ENCODE measurements at regions of chr3 and their contacts with region 1.

Region 1: GRCh38 chr3:71226565-71227269 is 356.8 kb downstream of the FOXP1 start:
- DNase-seq: peak; percentile 95
- ATAC-seq: peak; percentile 89
- H3K4me3 Mint-ChIP-seq: peak overlapping the region; percentile 78
- H3K27ac Mint-ChIP-seq: peak overlapping the region; percentile 97
- H3K4me1 Mint-ChIP-seq: peaks cover 88% of the 10 kb centered on the region
- H3K27me3 Mint-ChIP-seq: no peaks in the 10 kb centered on the region

Region 2: GRCh38 chr3:71006810-71007785 is 219.6 kb before region 1 on chr3:
- CTCF ChIA-PET with region 1: no interaction called
- POLR2A ChIA-PET with region 1: no interaction called
- intact Hi-C with region 1: loop called (anchors 1 kb)
- DNase-seq: no peak
- ATAC-seq: no peak
- H3K4me3 Mint-ChIP-seq: no peak overlapping the region
- H3K27ac Mint-ChIP-seq: peak overlapping the region; percentile 79
- H3K4me1 Mint-ChIP-seq: peaks cover 79% of the 10 kb centered on the region
- H3K27me3 Mint-ChIP-seq: no peaks in the 10 kb centered on the region

Region 3: DNA sequence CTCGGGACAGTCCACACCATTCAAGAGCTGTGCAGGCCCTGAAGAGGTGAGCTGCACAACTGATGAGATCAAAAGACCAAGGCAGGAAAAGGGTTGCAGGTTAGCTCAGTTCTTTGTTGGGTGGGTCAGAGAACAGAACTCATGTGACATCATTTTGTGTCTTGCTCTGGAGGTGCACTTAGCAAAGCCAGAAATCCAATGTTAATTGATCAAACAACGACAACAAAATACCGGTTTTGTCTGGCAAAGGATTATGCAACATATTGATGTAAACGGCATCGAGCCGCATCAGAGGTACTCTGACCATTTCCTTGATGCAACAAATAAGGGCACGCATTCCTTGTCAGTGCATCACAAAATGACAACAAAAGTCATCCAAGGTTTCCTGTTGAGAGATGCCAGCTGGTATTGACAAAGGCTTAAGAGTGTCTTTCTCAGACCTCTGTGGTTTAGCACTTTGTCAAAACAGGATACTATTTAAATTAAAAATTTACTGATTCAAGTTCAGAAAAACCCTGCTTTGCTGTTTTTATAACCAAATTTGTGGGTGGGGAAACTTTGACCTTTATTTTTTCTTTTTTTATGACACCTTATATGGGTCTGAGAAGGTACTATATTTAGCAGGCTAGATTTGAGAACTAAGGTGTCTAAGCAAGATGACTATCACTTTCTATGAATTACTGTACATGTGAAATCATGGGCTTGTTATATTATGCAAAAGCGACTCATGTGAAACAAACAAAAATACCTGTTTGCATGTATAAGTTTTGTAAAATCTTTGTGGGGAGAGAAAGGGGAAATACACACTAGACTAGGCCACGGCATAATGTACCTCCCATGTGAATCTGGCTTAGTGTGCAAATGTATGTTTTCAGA is 139.3 kb before region 1 on chr3:
- CTCF ChIA-PET with region 1: interaction called, 6 read pairs
- POLR2A ChIA-PET with region 1: interaction called, 4 read pairs
- intact Hi-C with region 1: loop called (anchors 1 kb)
- DNase-seq: peak; percentile 61
- ATAC-seq: peak; percentile 74
- H3K4me3 Mint-ChIP-seq: peak overlapping the region; percentile 52
- H3K27ac Mint-ChIP-seq: peak overlapping the region; percentile 93
- H3K4me1 Mint-ChIP-seq: peaks cover 94% of the 10 kb centered on the region
- H3K27me3 Mint-ChIP-seq: no peaks in the 10 kb centered on the region

Region 4: GRCh38 chr3:71195492-71195891 is 31.2 kb before region 1 on chr3:
- CTCF ChIA-PET with region 1: no interaction called
- POLR2A ChIA-PET with region 1: interaction called, 4 read pairs
- intact Hi-C with region 1: loop called in 1 of 2 experiments (anchors 2 kb)
- DNase-seq: no peak
- ATAC-seq: no peak
- H3K4me3 Mint-ChIP-seq: no peak overlapping the region
- H3K27ac Mint-ChIP-seq: peak overlapping the region; percentile 56
- H3K4me1 Mint-ChIP-seq: peaks cover 69% of the 10 kb centered on the region
- H3K27me3 Mint-ChIP-seq: no peaks in the 10 kb centered on the region

Region 5: GRCh38 chr3:71380096-71380495 is 153.4 kb after region 1 on chr3:
- CTCF ChIA-PET with region 1: no interaction called
- POLR2A ChIA-PET with region 1: no interaction called
- intact Hi-C with region 1: loop called in 1 of 2 experiments (anchors 2 kb)
- DNase-seq: no peak
- ATAC-seq: no peak
- H3K4me3 Mint-ChIP-seq: no peak overlapping the region
- H3K27ac Mint-ChIP-seq: peak overlapping the region; percentile 7
- H3K4me1 Mint-ChIP-seq: peaks cover 91% of the 10 kb centered on the region
- H3K27me3 Mint-ChIP-seq: no peaks in the 10 kb centered on the region

Region 6: GRCh38 chr3:71495708-71496472 is 269.2 kb after region 1 on chr3:
- CTCF ChIA-PET with region 1: no interaction called
- POLR2A ChIA-PET with region 1: interaction called, 3 read pairs
- intact Hi-C with region 1: loop called (anchors 5 kb)
- DNase-seq: peak; percentile 47
- ATAC-seq: peak; percentile 71
- H3K4me3 Mint-ChIP-seq: peak overlapping the region; percentile 56
- H3K27ac Mint-ChIP-seq: peak overlapping the region; percentile 89
- H3K4me1 Mint-ChIP-seq: peaks cover 75% of the 10 kb centered on the region
- H3K27me3 Mint-ChIP-seq: no peaks in the 10 kb centered on the region